ENCODE measurements at regions of chr15 and their contacts with region 1.

Region 1: DNA sequence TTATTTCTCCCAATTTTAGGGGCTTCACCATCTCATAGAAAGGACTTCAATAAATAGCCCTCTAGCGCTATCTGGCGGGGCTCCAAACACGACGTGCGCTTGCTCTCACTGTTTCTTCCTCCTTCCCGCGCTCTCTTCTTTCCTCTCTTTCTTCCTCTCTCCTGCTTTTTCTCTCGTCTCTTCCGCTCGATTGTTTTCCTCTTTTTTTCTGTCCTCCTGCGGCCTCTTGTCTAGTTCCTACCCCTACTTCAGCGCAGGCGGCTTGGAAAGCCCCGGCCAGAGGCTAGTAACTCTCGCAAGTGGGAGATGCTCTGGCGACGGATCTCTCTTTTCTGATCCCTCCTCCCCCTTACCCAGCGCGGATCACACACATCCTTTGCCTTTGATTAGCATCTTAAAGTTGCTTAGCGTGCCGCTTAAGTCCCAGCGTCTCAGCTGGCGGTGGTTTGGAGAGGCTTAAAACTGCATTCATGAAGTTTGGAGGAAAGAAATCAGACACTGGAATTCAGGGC is 6.2 kb upstream of the MEIS2 start:
- DNase-seq: peak; percentile 58
- H3K4me3 ChIP-seq: peak overlapping the region; percentile 23
- H3K27ac ChIP-seq: no peak overlapping the region
- H3K4me1 ChIP-seq: peaks cover 8% of the 10 kb centered on the region
- H3K27me3 ChIP-seq: peaks cover 87% of the 10 kb centered on the region
- CTCF ChIP-seq: peak; percentile 62

Region 2: DNA sequence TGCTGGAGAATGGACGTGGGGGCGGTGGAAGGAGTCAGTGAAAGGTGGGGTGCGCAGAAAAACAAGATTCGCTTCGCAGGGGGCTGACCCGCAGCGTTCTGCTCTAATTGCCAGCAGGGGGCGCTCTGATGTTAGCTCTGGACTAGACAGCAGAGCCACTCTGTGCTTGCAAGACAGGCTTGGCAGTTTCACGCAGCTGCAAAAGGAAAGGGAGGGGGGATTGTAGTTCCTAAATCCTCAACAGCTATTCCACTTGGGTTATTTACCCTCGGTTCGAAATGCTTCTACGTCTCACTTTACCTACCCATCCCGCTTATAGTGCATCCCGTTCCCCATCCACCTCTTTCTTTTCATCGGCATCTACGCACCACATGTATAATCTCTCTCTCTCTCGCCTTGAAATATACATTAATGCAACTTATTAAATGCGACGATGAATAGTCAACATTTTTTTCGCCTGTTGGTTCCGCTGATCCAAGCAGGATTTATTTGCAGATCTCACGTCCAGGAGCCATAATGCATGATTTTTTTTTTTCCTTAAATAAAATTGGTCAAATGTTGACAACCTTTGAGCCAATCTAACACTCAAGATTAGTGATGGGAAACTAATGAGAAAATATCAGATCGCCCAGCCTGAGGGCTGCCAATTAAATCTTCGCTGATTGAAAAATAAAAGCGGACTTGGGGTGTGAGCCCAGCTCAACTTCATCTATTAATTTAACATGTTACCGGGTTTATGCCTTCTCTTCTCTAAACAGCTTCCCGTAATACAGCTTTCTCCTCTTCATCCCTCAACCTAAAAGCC is 222.6 kb before region 1 on chr15:
- CTCF ChIA-PET with region 1: interaction called, 11 read pairs
- POLR2A ChIA-PET with region 1: no interaction called
- intact Hi-C with region 1: loop called (anchors 1 kb)
- DNase-seq: peak; percentile 90
- H3K4me3 ChIP-seq: no peak overlapping the region
- H3K27ac ChIP-seq: no peak overlapping the region
- H3K4me1 ChIP-seq: peaks cover 13% of the 10 kb centered on the region
- H3K27me3 ChIP-seq: peaks cover 57% of the 10 kb centered on the region
- CTCF ChIP-seq: peak; percentile 93

Region 3: GRCh38 chr15:38145651-38146111 is 1039.1 kb after region 1 on chr15:
- CTCF ChIA-PET with region 1: no interaction called
- POLR2A ChIA-PET with region 1: no interaction called
- intact Hi-C with region 1: no loop called
- DNase-seq: no peak
- H3K4me3 ChIP-seq: no peak overlapping the region
- H3K27ac ChIP-seq: no peak overlapping the region
- H3K4me1 ChIP-seq: no peaks in the 10 kb centered on the region
- H3K27me3 ChIP-seq: no peaks in the 10 kb centered on the region
- CTCF ChIP-seq: no peak

Measured in A673 (cell line).